ENCODE measurements at regions of chr2 and their contacts with region 1.

Region 1: GRCh38 chr2:164917296-164917903 is 37.9 kb downstream of the SLC38A11 start:
- DNase-seq: no peak
- H3K4me3 ChIP-seq: no peak overlapping the region
- H3K27ac ChIP-seq: no peak overlapping the region
- H3K4me1 ChIP-seq: peaks cover 0 to 19% (median 7%) of the 10 kb centered on the region in 6 donors
- H3K27me3 ChIP-seq: no peaks in the 10 kb centered on the region
- CTCF ChIP-seq: peak in 1 of 11 experiments; percentile 26
- POLR2A ChIP-seq: no peak

Region 2: DNA sequence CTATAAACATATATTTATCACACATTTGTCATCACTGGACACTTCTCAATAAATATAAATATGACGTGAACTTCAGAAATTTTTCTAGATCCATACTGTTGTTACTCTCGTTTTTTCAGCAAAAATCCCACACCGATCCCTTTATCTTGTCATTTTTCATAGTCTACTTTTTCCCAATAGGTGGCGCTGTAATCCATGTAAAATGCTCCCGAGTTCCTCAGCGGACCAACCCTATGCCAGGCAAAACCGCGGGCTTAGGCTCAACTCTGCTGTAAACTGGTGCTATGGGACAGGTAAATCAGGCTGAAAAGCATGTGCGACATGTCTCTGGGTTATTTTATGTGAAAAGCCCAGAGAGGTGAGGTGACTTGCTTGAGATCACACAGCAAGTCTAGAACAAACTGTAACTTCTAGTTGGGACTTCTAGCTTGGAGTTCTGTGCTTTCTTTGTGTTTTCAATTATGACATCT is 179.8 kb before region 1 on chr2:
- intact Hi-C with region 1: loop called (anchors 10 kb)
- DNase-seq: peak; percentile 75
- H3K4me3 ChIP-seq: no peak overlapping the region
- H3K27ac ChIP-seq: no peak overlapping the region
- H3K4me1 ChIP-seq: peaks cover 3 to 52% (median 17%) of the 10 kb centered on the region in 6 donors
- H3K27me3 ChIP-seq: no peaks in the 10 kb centered on the region
- CTCF ChIP-seq: peak; percentile 29 to 74 (median 63)
- POLR2A ChIP-seq: no peak

Measured in spleen (tissue), 13 donors.